ENCODE measurements at regions of chr2 and their contacts with region 1.

Region 1: DNA sequence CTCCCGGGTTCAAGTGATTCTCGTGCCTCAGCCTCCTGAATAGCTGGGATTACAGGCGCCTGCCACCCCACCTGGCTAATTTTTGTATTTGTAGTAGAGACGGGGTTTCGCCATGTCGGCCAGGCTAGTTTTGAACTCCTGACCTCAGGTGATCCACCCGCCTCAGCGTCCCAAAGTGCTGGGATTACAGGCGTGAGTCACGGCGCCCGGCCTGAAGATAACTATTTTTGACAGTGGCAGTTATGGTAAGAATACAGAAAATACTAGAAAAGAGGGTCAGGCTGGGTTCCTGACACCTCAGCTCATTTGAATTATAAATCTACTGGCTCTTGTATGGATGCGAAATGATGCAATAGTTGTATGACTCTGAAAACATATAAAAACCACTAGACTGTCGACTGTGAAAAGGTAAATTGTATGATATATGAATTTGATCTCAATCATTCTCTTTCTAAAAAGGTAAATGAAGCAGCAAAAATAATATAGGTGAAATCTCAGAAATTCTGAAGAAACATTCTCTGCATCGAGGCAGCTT is 11.1 kb upstream of the DGKD start:
- DNase-seq: no peak
- ATAC-seq: no peak
- H3K4me3 ChIP-seq: no peak overlapping the region
- H3K4me3 Mint-ChIP-seq: no peak overlapping the region
- H3K27ac ChIP-seq: no peak overlapping the region
- H3K27ac Mint-ChIP-seq: no peak overlapping the region
- H3K4me1 ChIP-seq: no peaks in the 10 kb centered on the region
- H3K4me1 Mint-ChIP-seq: peaks cover 14% of the 10 kb centered on the region
- H3K27me3 ChIP-seq: no peaks in the 10 kb centered on the region
- H3K27me3 Mint-ChIP-seq: no peaks in the 10 kb centered on the region
- CTCF ChIP-seq: no peak

Region 2: GRCh38 chr2:233323851-233324250 is 19.4 kb before region 1 on chr2:
- CTCF ChIA-PET with region 1: no interaction called
- POLR2A ChIA-PET with region 1: no interaction called
- intact Hi-C with region 1: loop called in 1 of 2 experiments (anchors 2 kb)
- DNase-seq: no peak
- ATAC-seq: no peak
- H3K4me3 ChIP-seq: no peak overlapping the region
- H3K4me3 Mint-ChIP-seq: no peak overlapping the region
- H3K27ac ChIP-seq: no peak overlapping the region
- H3K27ac Mint-ChIP-seq: no peak overlapping the region
- H3K4me1 ChIP-seq: peaks cover 9% of the 10 kb centered on the region
- H3K4me1 Mint-ChIP-seq: peaks cover 15% of the 10 kb centered on the region
- H3K27me3 ChIP-seq: no peaks in the 10 kb centered on the region
- H3K27me3 Mint-ChIP-seq: no peaks in the 10 kb centered on the region
- CTCF ChIP-seq: no peak

Region 3: GRCh38 chr2:233331536-233331935 is 11.7 kb before region 1 on chr2:
- CTCF ChIA-PET with region 1: no interaction called
- POLR2A ChIA-PET with region 1: interaction called, 13 read pairs
- intact Hi-C with region 1: no loop called
- DNase-seq: peak; percentile 60 to 94 (median 73)
- ATAC-seq: peak; percentile 96
- H3K4me3 ChIP-seq: peak overlapping the region; percentile 5
- H3K4me3 Mint-ChIP-seq: peak overlapping the region; percentile 78
- H3K27ac ChIP-seq: peak overlapping the region; percentile 80 to 86
- H3K27ac Mint-ChIP-seq: peak overlapping the region; percentile 93
- H3K4me1 ChIP-seq: peaks cover 63% of the 10 kb centered on the region
- H3K4me1 Mint-ChIP-seq: peaks cover 57% of the 10 kb centered on the region
- H3K27me3 ChIP-seq: no peaks in the 10 kb centered on the region
- H3K27me3 Mint-ChIP-seq: no peaks in the 10 kb centered on the region
- CTCF ChIP-seq: no peak

Region 4: GRCh38 chr2:233892793-233893192 is 549.6 kb after region 1 on chr2:
- CTCF ChIA-PET with region 1: no interaction called
- POLR2A ChIA-PET with region 1: no interaction called
- intact Hi-C with region 1: no loop called
- DNase-seq: no peak
- ATAC-seq: no peak
- H3K4me3 ChIP-seq: no peak overlapping the region
- H3K4me3 Mint-ChIP-seq: no peak overlapping the region
- H3K27ac ChIP-seq: no peak overlapping the region
- H3K27ac Mint-ChIP-seq: no peak overlapping the region
- H3K4me1 ChIP-seq: no peaks in the 10 kb centered on the region
- H3K4me1 Mint-ChIP-seq: no peaks in the 10 kb centered on the region
- H3K27me3 ChIP-seq: peaks cover 10 to 14% of the 10 kb centered on the region in 2 experiments
- H3K27me3 Mint-ChIP-seq: peaks cover 51% of the 10 kb centered on the region
- CTCF ChIP-seq: no peak